GM12878 (cell line): ENCODE measurements at regions of chr11 and their contacts with region 1.

Region 1: GRCh38 chr11:82229341-82229740 is 504.3 kb downstream of the FAM181B start:
- DNase-seq: no peak
- ATAC-seq: peak; percentile 78
- H3K4me3 ChIP-seq: no peak overlapping the region
- H3K27ac ChIP-seq: no peak overlapping the region
- H3K4me1 ChIP-seq: no peaks in the 10 kb centered on the region
- H3K27me3 ChIP-seq: no peaks in the 10 kb centered on the region; a peak in 1 of 4 replicates
- CTCF ChIP-seq: peak; percentile 19 to 55 (median 29); a peak in 3 of 6 replicates
- EP300 ChIP-seq: no peak
- POLR2A ChIP-seq: no peak
- RAD21 ChIP-seq: peak; percentile 69

Region 2: GRCh38 chr11:81644239-81644840 is 585.0 kb before region 1 on chr11:
- CTCF ChIA-PET with region 1: interaction called, 11 read pairs
- POLR2A ChIA-PET with region 1: no interaction called
- RAD21 ChIA-PET with region 1: interaction called, 5 read pairs
- SMC1A ChIA-PET with region 1: interaction called, 34 read pairs
- in situ Hi-C with region 1: loop called (anchors 5 kb)
- intact Hi-C with region 1: loop called (anchors 1 kb)
- DNase-seq: no peak
- ATAC-seq: peak; percentile 90
- H3K4me3 ChIP-seq: no peak overlapping the region
- H3K27ac ChIP-seq: no peak overlapping the region
- H3K4me1 ChIP-seq: no peaks in the 10 kb centered on the region
- H3K27me3 ChIP-seq: no peaks in the 10 kb centered on the region
- CTCF ChIP-seq: peak; percentile 49 to 58 (median 55); a peak in 5 of 6 replicates
- EP300 ChIP-seq: no peak
- POLR2A ChIP-seq: no peak
- RAD21 ChIP-seq: peak; percentile 69

Region 3: DNA sequence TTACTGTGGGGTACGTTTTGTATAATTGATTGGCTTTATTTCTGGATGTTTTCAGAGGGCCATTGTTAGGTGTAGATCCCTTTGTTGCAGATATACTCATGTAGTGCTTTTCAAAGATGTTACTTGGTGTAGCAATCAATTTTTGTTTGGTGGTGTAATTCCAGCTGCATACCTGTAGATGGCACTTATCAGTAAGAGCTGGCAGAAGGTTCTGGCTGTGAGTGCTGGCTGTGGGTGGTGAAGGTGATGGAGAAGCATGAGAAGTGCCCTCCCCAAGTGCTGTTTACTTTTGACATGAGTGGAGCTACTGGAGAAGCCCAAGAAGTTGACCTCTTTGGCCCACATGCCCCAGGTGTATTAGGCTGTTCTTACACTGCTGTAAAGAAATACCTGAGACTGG is 570.6 kb before region 1 on chr11:
- CTCF ChIA-PET with region 1: interaction called, 6 read pairs
- POLR2A ChIA-PET with region 1: no interaction called
- RAD21 ChIA-PET with region 1: no interaction called
- SMC1A ChIA-PET with region 1: no interaction called
- in situ Hi-C with region 1: no loop called
- intact Hi-C with region 1: loop called (anchors 5 kb)
- DNase-seq: no peak
- ATAC-seq: peak; percentile 74
- H3K4me3 ChIP-seq: no peak overlapping the region
- H3K27ac ChIP-seq: no peak overlapping the region
- H3K4me1 ChIP-seq: no peaks in the 10 kb centered on the region
- H3K27me3 ChIP-seq: no peaks in the 10 kb centered on the region
- CTCF ChIP-seq: peak; percentile 51 to 64 (median 59); a peak in 5 of 6 replicates
- EP300 ChIP-seq: no peak
- POLR2A ChIP-seq: no peak
- RAD21 ChIP-seq: peak; percentile 61